Activated CD4-positive, alpha-beta memory T cell treated with anti-CD3 and anti-CD28 coated beads for 36 hours (primary cell): ENCODE measurements at regions of chr9 and their contacts with region 1.

Region 1: DNA sequence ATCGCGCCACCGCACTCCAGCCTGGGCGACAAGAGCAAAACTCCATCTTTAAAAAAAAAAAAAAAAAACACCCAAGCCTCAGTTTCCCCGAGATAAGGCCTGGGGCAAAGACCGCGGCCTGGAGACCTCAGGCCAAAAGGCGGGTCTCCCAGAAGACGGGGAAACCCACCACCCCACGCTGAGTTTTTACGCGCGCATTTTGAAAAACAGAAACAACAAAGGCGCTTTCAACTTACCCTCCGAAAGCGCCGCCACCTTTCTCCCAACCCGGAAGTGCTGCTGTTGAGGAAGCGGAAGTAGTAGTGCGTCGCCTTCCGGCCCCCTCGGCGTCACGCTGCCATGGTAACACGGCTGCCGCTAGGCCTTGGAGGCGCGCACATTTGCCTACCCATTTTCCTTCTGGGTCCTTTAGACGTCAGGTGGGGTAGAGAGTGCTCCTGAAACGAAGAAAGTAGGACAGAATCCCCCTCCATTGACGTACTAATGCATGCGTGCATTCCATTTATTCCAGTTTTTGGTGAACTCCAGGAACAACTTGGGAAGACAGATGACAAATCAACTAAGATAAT is at the start of gene TTF1:
- DNase-seq: peak; percentile 96
- H3K4me3 Mint-ChIP-seq: peak within 1 kb of the TSS; percentile 94
- H3K27ac Mint-ChIP-seq: peak within 1 kb of the TSS; percentile 90
- H3K4me1 Mint-ChIP-seq: peaks cover 54% of the 10 kb centered on the region
- H3K27me3 Mint-ChIP-seq: peaks cover 13% of the 10 kb centered on the region
- total RNA-seq, gene TTF1: 31.0 to 33.7 TPM

Region 2: DNA sequence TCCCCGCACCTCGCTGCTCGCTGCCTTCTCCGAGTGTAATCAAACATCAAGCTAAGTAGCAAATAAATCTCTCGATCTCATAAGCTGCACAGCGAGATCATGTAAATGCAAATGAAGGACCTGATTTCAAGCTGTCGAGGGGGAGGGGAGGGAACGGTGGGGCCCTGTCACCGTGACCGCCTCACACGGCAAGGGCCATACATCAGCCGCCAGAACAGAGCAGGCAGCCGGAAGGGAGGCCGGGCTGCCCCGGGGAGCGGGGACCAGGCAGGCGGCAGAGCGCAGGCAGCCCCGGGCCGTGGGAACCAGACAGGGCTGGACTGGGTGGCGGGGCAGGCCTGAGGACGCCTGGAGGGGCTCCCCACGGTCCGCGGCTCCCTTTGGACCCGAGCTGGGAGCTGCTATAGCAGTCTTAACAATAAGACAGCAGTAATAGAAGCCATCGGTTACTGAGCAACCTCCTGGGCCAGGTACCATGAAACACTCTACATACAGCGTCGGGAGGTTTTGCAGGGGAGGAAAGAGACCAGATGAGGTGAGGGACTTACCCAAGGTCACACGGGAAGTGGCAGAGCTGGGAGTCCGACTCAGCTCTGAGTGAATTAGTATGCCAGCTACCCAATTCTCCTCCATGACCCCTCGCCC is 80.2 kb after region 1 on chr9:
- CTCF ChIA-PET with region 1: interaction called, 5 read pairs
- POLR2A ChIA-PET with region 1: no interaction called
- intact Hi-C with region 1: loop called (anchors 1 kb)
- DNase-seq: peak; percentile 78
- H3K4me3 Mint-ChIP-seq: peak overlapping the region; percentile 56
- H3K27ac Mint-ChIP-seq: peak overlapping the region; percentile 85
- H3K4me1 Mint-ChIP-seq: peaks cover 28% of the 10 kb centered on the region
- H3K27me3 Mint-ChIP-seq: peaks cover 31% of the 10 kb centered on the region

Region 3: DNA sequence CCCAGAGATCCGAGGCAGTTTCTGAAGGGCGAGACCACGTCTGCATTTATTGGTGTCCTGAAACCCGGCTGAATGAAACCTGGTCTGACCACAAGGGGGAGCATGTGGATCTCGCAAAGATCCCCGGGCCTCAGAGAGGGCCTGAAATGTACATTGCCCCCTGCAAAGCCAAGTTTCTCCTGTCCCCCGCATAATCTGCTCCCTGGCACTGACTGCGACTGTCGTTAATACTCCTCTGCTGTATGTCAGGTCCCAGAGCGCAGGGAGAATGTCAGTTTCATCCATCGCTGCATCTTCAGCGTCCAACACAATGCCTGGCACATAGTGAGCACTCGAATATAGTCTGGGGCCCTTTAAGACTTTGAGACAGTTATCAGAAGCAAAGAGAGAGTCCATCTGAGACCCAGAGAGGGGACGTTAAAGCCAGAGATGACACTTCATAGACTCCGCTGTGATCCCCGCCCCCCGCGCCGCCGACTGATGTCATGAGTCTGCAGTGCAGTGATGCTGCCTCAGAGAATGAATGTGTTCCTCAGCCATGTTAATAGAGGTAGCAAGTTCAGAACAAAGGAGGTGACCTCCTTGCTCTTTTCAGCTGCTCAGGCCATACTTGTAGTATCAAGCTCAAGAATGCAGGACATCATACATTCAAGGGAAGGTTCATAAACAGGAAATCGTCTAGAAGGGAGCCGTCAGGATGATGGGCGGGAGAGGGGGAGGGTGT is 101.3 kb after region 1 on chr9:
- CTCF ChIA-PET with region 1: no interaction called
- POLR2A ChIA-PET with region 1: no interaction called
- intact Hi-C with region 1: loop called (anchors 1 kb)
- DNase-seq: peak; percentile 74
- H3K4me3 Mint-ChIP-seq: no peak overlapping the region
- H3K27ac Mint-ChIP-seq: no peak overlapping the region
- H3K4me1 Mint-ChIP-seq: peaks cover 14% of the 10 kb centered on the region
- H3K27me3 Mint-ChIP-seq: peaks cover 3% of the 10 kb centered on the region

Region 4: DNA sequence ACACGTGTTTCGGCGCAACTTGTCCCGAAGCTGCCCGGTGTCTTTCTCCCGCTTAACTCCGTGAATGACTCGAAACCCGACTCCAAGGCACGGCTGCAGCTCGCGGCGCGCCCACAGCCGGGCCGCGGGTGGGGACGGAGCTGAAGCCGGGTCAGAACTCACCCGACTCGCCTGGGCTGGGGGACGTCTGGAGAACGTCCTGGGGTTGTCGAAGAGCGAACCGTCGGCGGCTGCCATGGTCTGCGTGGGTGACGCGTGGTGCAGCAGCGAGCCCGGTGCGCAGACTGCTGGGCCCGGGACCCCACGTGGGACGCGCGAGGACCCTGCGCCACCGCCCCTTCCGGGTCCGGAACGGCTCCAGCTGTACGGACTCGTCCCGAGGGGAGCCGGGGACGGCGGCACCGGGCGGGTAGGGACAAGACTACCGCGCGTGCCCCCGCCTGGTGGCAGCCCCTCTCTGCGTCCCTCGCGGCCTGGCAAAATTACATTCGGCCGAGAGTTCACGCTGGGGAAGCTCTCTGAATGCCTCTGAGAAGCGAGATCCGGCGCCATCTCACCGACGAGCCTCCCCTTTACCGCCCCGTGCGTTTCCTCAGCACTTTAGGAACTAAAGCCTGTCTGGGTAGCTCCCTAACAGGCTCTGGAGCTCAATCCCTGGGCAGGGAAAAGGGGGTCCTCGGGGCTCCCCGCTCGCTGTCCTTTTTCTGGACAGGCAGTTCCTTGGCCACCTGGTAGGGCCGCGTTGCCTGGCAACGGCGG is 263.2 kb after region 1 on chr9 and contains the start of gene DDX31:
- CTCF ChIA-PET with region 1: no interaction called
- POLR2A ChIA-PET with region 1: no interaction called
- intact Hi-C with region 1: loop called (anchors 5 kb)
- DNase-seq: peak; percentile 89
- H3K4me3 Mint-ChIP-seq: peak within 1 kb of the TSS; percentile 86
- H3K27ac Mint-ChIP-seq: peak within 1 kb of the TSS; percentile 87
- H3K4me1 Mint-ChIP-seq: peaks cover 44% of the 10 kb centered on the region
- H3K27me3 Mint-ChIP-seq: no peaks in the 10 kb centered on the region
- total RNA-seq, gene DDX31: 17.2 to 18.8 TPM

Region 5: DNA sequence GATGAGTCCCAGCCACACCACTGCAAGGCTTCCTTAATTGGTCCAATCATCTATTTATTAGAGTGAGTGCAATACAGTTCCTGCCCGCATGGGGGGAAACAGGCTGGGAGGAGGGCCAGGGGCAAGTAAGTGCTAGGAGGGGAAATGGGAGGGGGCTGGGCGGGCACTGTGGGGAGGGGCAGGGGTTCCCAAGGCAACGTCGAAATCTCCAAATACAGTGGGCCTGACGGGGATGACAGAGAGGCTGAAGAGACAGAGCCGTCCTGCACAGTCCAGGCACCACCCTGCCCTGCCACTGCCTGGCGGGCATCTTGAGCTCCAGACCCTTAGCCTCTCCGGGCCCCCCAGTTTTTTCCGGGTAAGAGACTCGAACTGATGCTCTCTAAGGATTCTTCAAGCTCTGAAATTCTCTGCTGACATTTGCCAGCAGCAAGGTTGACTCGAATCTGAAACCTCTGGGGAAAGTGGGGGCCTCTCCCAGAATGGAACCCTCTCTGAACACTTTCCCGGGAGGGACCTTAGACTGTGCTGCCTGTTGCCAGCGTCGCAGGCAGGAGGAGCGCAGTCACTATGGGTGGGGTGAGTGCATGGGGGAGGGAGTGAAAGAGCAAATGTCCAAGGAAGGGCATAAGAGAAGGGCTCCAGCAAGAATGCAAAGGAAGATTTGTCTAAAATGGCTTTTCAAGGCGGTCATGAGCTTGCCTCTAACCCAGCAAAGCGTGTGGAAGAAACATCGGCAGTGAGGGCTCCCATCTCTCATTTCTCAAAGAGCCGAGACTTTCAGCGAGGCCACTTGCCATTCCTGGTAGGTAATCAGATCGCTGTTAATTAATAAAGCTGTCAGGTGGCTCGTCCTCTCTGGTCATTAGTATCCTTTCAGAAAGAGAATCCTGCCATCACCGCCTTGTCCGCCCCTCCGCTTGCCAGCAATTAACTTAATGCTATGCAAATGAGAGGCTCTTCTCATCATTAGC is 362.6 kb after region 1 on chr9:
- CTCF ChIA-PET with region 1: no interaction called
- POLR2A ChIA-PET with region 1: no interaction called
- intact Hi-C with region 1: loop called (anchors 10 kb)
- DNase-seq: peak; percentile 80
- H3K4me3 Mint-ChIP-seq: peak overlapping the region; percentile 80
- H3K27ac Mint-ChIP-seq: peak overlapping the region; percentile 80
- H3K4me1 Mint-ChIP-seq: peaks cover 18% of the 10 kb centered on the region
- H3K27me3 Mint-ChIP-seq: no peaks in the 10 kb centered on the region

Region 6: GRCh38 chr9:132944302-132945185 is 537.9 kb after region 1 on chr9 and contains the start of gene TSC1:
- CTCF ChIA-PET with region 1: no interaction called
- POLR2A ChIA-PET with region 1: no interaction called
- intact Hi-C with region 1: loop called (anchors 10 kb)
- DNase-seq: peak; percentile 98
- H3K4me3 Mint-ChIP-seq: peak within 1 kb of the TSS; percentile 84
- H3K27ac Mint-ChIP-seq: peak within 1 kb of the TSS; percentile 95
- H3K4me1 Mint-ChIP-seq: peaks cover 26% of the 10 kb centered on the region
- H3K27me3 Mint-ChIP-seq: no peaks in the 10 kb centered on the region
- total RNA-seq, gene TSC1: 19.6 to 23.6 TPM